HepG2 (cell line): ENCODE measurements at regions of chr1 and their contacts with region 1.

Region 1: DNA sequence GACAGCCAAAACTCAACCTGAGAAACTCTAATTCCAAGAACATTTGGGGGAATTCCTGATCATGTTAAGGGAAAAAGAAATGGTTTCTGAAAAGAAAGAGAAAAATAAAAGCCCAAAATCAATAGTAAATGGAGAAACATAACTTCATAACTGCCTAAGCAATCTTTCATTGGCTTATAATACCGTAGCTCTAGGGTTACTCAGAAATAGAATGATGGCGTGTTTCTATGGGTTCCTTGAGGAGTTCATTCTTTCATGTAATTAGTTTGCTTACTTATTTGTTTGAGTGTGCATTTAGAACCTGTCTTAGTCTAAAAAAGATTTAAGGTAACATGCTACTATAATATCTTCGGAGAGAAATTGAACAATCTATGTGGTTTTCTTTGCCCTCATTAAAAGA is 37.5 kb upstream of the FBXO28 start:
- DNase-seq: no peak
- ATAC-seq: no peak
- H3K4me3 ChIP-seq: no peak overlapping the region
- H3K27ac ChIP-seq: no peak overlapping the region
- H3K4me1 ChIP-seq: 0 out of 2 replicates have a peak, but pooled peaks cover 4% of the 10 kb centered on the region
- H3K27me3 ChIP-seq: 0 out of 5 replicates have a peak, but pooled peaks cover 0 to 6% of the 10 kb centered on the region in 2 experiments
- CTCF ChIP-seq: no peak
- EP300 ChIP-seq: no peak
- POLR2A ChIP-seq: no peak
- RAD21 ChIP-seq: no peak

Region 2: DNA sequence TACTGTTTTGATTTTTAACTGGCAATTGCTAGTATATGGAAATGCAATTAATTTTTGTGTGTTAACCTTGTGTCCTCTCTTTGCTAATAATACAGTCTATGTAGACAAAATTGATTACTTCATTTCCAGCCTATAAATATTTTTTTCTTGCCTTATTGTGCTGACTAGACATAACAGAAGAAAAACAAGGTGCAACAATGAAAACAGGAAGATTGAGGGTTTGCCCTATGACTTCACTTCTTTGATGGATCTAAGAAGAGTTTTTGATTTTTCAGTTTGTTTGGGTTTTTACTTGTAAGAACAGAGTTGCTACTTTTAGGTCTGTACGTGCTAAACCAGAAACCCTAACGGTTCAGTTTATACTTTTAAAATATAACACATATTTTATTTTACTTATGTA is 271.7 kb after region 1 on chr1:
- CTCF ChIA-PET with region 1: no interaction called
- POLR2A ChIA-PET with region 1: no interaction called
- in situ Hi-C with region 1: no loop called
- intact Hi-C with region 1: no loop called
- DNase-seq: no peak
- ATAC-seq: no peak
- H3K4me3 ChIP-seq: no peak overlapping the region
- H3K27ac ChIP-seq: no peak overlapping the region
- H3K4me1 ChIP-seq: no peaks in the 10 kb centered on the region
- H3K27me3 ChIP-seq: no peaks in the 10 kb centered on the region
- CTCF ChIP-seq: no peak
- EP300 ChIP-seq: no peak
- POLR2A ChIP-seq: no peak
- RAD21 ChIP-seq: no peak

Region 3: GRCh38 chr1:224447251-224447650 is 370.8 kb after region 1 on chr1:
- CTCF ChIA-PET with region 1: no interaction called
- POLR2A ChIA-PET with region 1: no interaction called
- in situ Hi-C with region 1: no loop called
- intact Hi-C with region 1: no loop called
- DNase-seq: no peak
- ATAC-seq: no peak
- H3K4me3 ChIP-seq: no peak overlapping the region
- H3K27ac ChIP-seq: no peak overlapping the region
- H3K4me1 ChIP-seq: no peaks in the 10 kb centered on the region
- H3K27me3 ChIP-seq: no peaks in the 10 kb centered on the region
- CTCF ChIP-seq: no peak
- EP300 ChIP-seq: no peak
- POLR2A ChIP-seq: no peak
- RAD21 ChIP-seq: no peak

Region 4: GRCh38 chr1:224873434-224874369 is 797.3 kb after region 1 on chr1:
- CTCF ChIA-PET with region 1: no interaction called
- POLR2A ChIA-PET with region 1: no interaction called
- in situ Hi-C with region 1: no loop called
- intact Hi-C with region 1: loop called (anchors 5 kb)
- DNase-seq: peak; percentile 37
- ATAC-seq: peak; percentile 41; the same call in 1 of the 3 replicates
- H3K4me3 ChIP-seq: no peak overlapping the region
- H3K27ac ChIP-seq: no peak overlapping the region
- H3K4me1 ChIP-seq: peaks cover 22% of the 10 kb centered on the region
- H3K27me3 ChIP-seq: 0 out of 5 replicates have a peak, but pooled peaks cover 0 to 7% of the 10 kb centered on the region in 2 experiments
- CTCF ChIP-seq: no peak
- EP300 ChIP-seq: no peak
- POLR2A ChIP-seq: no peak
- RAD21 ChIP-seq: no peak